ENCODE measurements at regions of chr1 and their contacts with region 1.

Region 1: GRCh38 chr1:19424651-19425570 is 60.4 kb downstream of the CAPZB start:
- DNase-seq: no peak
- H3K4me3 ChIP-seq: peak overlapping the region in 1 of 3 donors; percentile 13
- H3K27ac ChIP-seq: peak overlapping the region; percentile 81 to 90
- H3K4me1 ChIP-seq: peaks cover 32 to 44% of the 10 kb centered on the region in 2 donors
- H3K27me3 ChIP-seq: no peaks in the 10 kb centered on the region
- CTCF ChIP-seq: no peak
- POLR2A ChIP-seq: peak; percentile 12

Region 2: GRCh38 chr1:19384113-19384512 is 40.8 kb before region 1 on chr1:
- intact Hi-C with region 1: loop called (anchors 2 kb)
- DNase-seq: no peak
- H3K4me3 ChIP-seq: no peak overlapping the region
- H3K27ac ChIP-seq: peak overlapping the region in 1 of 2 donors; percentile 17
- H3K4me1 ChIP-seq: peaks cover 3 to 22% of the 10 kb centered on the region in 2 donors
- H3K27me3 ChIP-seq: no peaks in the 10 kb centered on the region
- CTCF ChIP-seq: no peak
- POLR2A ChIP-seq: no peak

Region 3: DNA sequence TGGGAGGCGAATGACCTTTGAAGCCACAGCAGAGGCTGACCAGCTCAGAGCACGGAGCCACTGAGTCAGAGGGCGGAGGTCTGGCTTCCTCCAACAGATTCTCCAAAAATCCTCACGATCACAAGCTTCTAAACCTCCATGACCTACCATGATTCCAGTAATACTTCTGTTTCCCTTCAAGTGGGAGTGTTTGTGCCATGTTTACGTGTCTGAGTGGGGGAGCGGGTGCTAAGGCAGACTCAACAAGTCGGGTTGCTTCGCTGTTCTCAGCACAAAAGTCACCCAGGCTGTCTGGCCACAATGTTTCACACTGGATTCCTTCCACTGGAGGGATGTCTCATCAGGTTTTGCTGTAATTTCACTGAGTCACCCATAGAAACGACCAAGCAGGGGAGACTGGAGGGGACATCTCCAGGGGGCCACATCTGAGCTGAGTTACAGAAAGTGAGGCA is 26.6 kb before region 1 on chr1:
- intact Hi-C with region 1: no loop called
- DNase-seq: no peak
- H3K4me3 ChIP-seq: no peak overlapping the region
- H3K27ac ChIP-seq: peak overlapping the region in 1 of 2 donors; percentile 14
- H3K4me1 ChIP-seq: peaks cover 0 to 7% of the 10 kb centered on the region in 2 donors
- H3K27me3 ChIP-seq: no peaks in the 10 kb centered on the region
- CTCF ChIP-seq: peak in 1 of 3 donors; percentile 15
- POLR2A ChIP-seq: no peak

Region 4: GRCh38 chr1:20165522-20165951 is 740.6 kb after region 1 on chr1:
- intact Hi-C with region 1: loop called (anchors 5 kb)
- DNase-seq: no peak
- H3K4me3 ChIP-seq: no peak overlapping the region
- H3K27ac ChIP-seq: no peak overlapping the region
- H3K4me1 ChIP-seq: no peaks in the 10 kb centered on the region
- H3K27me3 ChIP-seq: no peaks in the 10 kb centered on the region
- CTCF ChIP-seq: peak in 1 of 3 donors; percentile 12
- POLR2A ChIP-seq: no peak